A549 (cell line): ENCODE measurements at regions of chr19 and their contacts with region 1.

Region 1: DNA sequence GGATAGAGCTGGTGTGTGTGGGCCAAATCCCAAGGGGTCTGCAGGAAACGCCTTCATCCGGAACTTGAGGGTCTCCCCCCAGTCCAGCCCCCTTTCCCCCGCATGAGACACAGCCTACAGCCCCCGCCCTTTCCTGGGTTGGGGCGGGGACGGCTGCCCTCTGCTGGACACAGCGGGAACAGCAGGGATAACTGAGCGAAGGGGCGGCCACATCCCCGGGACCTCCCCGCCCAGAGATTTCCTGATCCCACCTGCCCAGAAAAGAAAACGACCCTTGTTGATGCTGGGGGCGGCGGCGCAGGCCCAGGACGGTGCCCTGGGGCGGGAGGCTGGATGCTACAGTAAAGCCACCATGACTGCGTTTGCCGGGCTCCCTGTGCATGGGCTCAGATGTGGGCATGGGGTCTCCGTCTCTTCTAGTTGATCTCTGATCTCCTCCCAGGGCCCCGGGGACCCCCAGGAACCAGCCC is 14.2 kb downstream of the ONECUT3 start:
- DNase-seq: peak in 1 of 2 experiments; percentile 71
- ATAC-seq: peak in 1 of 2 experiments; percentile 77; a peak in 3 of 6 replicates
- H3K4me3 ChIP-seq: no peak overlapping the region
- H3K27ac ChIP-seq: no peak overlapping the region
- H3K4me1 ChIP-seq: no peaks in the 10 kb centered on the region
- CTCF ChIP-seq: peak; percentile 77
- EP300 ChIP-seq: no peak
- POLR2A ChIP-seq: no peak
- RAD21 ChIP-seq: peak; percentile 76 to 81

Region 2: GRCh38 chr19:1754616-1755466 is 12.7 kb before region 1 on chr19:
- CTCF ChIA-PET with region 1: interaction called, 16 read pairs
- POLR2A ChIA-PET with region 1: no interaction called
- DNase-seq: peak in 1 of 2 experiments; percentile 79
- ATAC-seq: peak; percentile 19 to 39; a peak in 4 of 6 replicates
- H3K4me3 ChIP-seq: no peak overlapping the region; the same call in 2 of the 3 replicates
- H3K27ac ChIP-seq: no peak overlapping the region
- H3K4me1 ChIP-seq: peaks cover 14% of the 10 kb centered on the region; the same call in 2 of the 3 replicates
- CTCF ChIP-seq: no peak
- EP300 ChIP-seq: no peak
- POLR2A ChIP-seq: no peak
- RAD21 ChIP-seq: no peak

Region 3: DNA sequence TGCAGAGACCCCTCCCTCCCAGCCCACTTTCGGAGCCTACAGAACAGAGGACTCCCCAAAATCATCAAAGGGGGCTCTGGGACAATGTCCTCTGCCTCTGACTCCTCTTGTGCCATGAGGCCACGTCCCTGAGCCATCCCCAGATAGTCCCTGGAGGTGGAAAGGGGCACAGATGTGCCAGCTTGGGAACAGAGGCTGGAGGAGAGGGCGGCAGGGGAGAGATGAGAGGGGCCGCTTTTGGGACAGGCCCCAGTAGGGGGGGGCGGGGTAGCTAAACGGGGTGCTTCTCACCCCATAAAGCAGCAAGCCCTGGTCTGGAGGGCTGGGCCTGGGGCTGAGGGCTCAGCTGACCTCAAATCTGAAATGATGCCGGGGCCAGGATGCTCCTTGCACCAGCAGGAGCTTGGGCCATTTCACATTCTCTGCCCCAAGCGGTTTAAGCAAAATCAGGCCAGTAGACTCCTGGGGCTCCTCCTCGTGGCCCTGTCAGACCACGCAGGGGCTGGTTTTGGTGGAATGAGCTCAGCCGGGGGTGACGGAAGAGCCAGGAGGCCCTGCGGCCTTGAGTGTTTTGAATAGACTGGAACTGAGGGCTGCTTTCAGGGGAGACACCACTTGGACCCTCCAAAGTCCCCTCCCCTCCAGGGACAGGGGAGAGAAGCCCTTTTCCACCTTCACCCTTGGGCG is 12.9 kb after region 1 on chr19:
- CTCF ChIA-PET with region 1: interaction called, 15 read pairs
- POLR2A ChIA-PET with region 1: no interaction called
- DNase-seq: peak in 1 of 2 experiments; percentile 53
- ATAC-seq: peak; percentile 66 to 78; a peak in 5 of 6 replicates
- H3K4me3 ChIP-seq: no peak overlapping the region
- H3K27ac ChIP-seq: no peak overlapping the region
- H3K4me1 ChIP-seq: no peaks in the 10 kb centered on the region
- CTCF ChIP-seq: no peak
- EP300 ChIP-seq: no peak
- POLR2A ChIP-seq: no peak
- RAD21 ChIP-seq: no peak; a peak in 1 of 5 replicates